ENCODE measurements at regions of chr18 and their contacts with region 1.

Region 1: DNA sequence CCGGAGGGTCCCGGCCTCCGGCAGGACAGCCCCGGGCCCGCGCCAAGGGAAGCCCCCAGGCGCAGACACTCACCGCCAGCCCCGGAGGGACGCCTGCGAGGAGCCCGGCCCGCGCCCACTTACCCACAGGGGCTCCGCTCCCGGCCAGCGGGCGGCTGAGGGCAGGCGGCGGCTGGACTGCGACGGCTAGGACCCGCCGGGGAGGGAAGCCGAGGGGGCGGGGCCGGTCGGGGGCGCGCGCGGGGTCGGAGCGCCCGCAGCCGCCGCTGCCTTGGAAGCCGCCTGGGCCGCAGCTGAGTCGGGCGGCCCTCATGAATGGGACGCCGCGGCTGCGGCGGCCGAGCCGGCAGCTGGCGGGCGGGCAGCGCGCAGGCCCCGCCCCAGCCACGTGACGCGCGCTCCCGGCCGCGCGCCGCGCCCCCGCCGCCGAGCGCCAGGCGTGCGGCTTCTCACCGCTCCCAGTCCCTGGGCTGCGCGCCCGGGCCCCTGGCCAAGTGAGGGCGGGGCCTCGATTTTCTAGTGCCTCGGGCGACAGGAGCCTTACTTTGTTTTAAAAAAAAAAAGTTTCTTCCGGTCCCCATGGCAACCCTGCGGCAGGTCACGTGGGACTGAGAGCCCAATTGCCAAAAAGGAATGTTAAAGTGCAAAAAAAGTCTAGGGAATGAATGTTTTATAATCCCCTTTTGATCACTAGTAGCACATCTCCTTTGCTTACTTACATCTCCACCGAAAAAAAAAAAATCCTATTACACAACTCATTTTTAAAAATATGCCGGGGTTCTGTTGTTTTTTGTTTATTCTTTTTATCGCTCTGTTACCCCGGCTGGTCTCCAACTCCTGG is at the start of gene LPIN2:
- DNase-seq: peak; percentile 97
- H3K4me3 Mint-ChIP-seq: peak within 1 kb of the TSS; percentile 84
- H3K27ac Mint-ChIP-seq: peak within 1 kb of the TSS; percentile 92
- H3K4me1 Mint-ChIP-seq: peaks cover 68% of the 10 kb centered on the region
- H3K27me3 Mint-ChIP-seq: no peaks in the 10 kb centered on the region
- total RNA-seq, gene LPIN2: 62.4 to 65.7 TPM

Region 2: DNA sequence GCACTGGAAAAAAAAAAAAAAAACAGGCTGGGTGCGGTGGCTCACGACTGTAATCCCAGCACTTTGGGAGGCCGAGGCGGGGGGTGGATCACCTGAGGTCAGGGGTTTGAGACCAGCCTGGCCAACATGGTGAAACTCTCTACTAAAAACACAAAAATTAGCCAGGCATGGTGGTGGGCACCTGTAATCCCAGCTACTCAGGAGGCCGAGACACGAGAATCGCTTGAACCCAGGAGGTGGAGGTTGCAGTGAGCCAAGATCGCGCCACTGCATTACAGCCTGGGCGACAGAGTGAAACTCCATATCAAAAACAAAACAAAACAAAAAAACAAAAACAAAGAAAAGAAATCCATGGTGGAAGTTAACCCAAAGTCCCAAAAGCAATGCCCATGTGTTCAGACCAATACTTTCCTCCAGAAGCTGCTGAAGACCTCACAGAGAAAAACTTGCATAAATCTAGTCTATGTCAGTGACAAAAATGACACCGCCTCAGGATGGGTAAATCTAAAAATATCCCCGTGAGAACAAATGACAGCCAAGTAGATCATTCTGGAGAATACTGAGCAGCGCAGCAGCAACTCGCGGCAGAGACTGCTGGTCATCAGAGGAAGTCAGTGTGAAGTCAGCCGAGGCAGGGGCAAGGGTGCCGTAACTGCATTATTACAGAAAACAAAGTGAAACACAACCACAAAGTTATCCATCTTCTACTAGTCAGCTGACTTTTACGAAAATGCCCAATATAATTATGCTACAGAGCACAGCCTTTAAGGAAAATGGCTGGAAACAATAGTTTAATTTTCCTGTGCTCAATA is 41.2 kb before region 1 on chr18:
- CTCF ChIA-PET with region 1: no interaction called
- intact Hi-C with region 1: loop called (anchors 2 kb)
- DNase-seq: peak; percentile 83
- H3K4me3 Mint-ChIP-seq: peak overlapping the region; percentile 77
- H3K27ac Mint-ChIP-seq: peak overlapping the region; percentile 100
- H3K4me1 Mint-ChIP-seq: peaks cover 86% of the 10 kb centered on the region
- H3K27me3 Mint-ChIP-seq: no peaks in the 10 kb centered on the region

Measured in activated naive CD4-positive, alpha-beta T cell treated with anti-CD3 and anti-CD28 coated beads for 36 hours (primary cell).